ENCODE measurements at regions of chr9 and their contacts with region 1.

Region 1: GRCh38 chr9:129944506-129945116 is 98.4 kb downstream of the FNBP1 start:
- DNase-seq: peak; percentile 87
- H3K4me3 Mint-ChIP-seq: peak overlapping the region; percentile 35
- H3K27ac Mint-ChIP-seq: peak overlapping the region; percentile 90
- H3K4me1 Mint-ChIP-seq: peaks cover 35% of the 10 kb centered on the region
- H3K27me3 Mint-ChIP-seq: no peaks in the 10 kb centered on the region

Region 2: GRCh38 chr9:129889941-129890717 is 54.5 kb before region 1 on chr9:
- intact Hi-C with region 1: loop called (anchors 1 kb)
- DNase-seq: peak; percentile 94
- H3K4me3 Mint-ChIP-seq: peak overlapping the region; percentile 83
- H3K27ac Mint-ChIP-seq: peak overlapping the region; percentile 98
- H3K4me1 Mint-ChIP-seq: peaks cover 79% of the 10 kb centered on the region
- H3K27me3 Mint-ChIP-seq: no peaks in the 10 kb centered on the region

Region 3: GRCh38 chr9:129954868-129955550 is 10.4 kb after region 1 on chr9:
- intact Hi-C with region 1: loop called (anchors 1 kb)
- DNase-seq: no peak
- H3K4me3 Mint-ChIP-seq: no peak overlapping the region
- H3K27ac Mint-ChIP-seq: peak overlapping the region; percentile 14
- H3K4me1 Mint-ChIP-seq: peaks cover 28% of the 10 kb centered on the region
- H3K27me3 Mint-ChIP-seq: no peaks in the 10 kb centered on the region

Region 4: GRCh38 chr9:130010151-130010988 is 65.8 kb after region 1 on chr9:
- intact Hi-C with region 1: no loop called
- DNase-seq: peak; percentile 79
- H3K4me3 Mint-ChIP-seq: peak overlapping the region; percentile 66
- H3K27ac Mint-ChIP-seq: peak overlapping the region; percentile 93
- H3K4me1 Mint-ChIP-seq: peaks cover 59% of the 10 kb centered on the region
- H3K27me3 Mint-ChIP-seq: no peaks in the 10 kb centered on the region

Measured in activated CD4-positive, alpha-beta T cell treated with anti-CD3 and anti-CD28 coated beads, Interleukin-2, amount 10 ng/mL, durations not matched to agents 24 days and 14 days (primary cell).